ENCODE measurements at regions of chr1 and their contacts with region 1.

Region 1: GRCh38 chr1:223712194-223712849 is at the start of gene CAPN2:
- DNase-seq: peak; percentile 86 to 93 (median 89)
- ATAC-seq: peak; percentile 90 to 97 (median 92)
- H3K4me3 ChIP-seq: peak within 1 kb of the TSS; percentile 66 to 97 (median 86)
- H3K27ac ChIP-seq: peak within 1 kb of the TSS; percentile 93 to 99 (median 97)
- H3K4me1 ChIP-seq: peaks cover 0 to 75% (median 68%) of the 10 kb centered on the region in 12 donors
- H3K27me3 ChIP-seq: no peaks in the 10 kb centered on the region
- CTCF ChIP-seq: peak; percentile 54 to 90 (median 83)
- POLR2A ChIP-seq: peak in 1 of 2 donors; percentile 87
- total RNA-seq, gene CAPN2: 60.2 to 115 (median 82.7) TPM

Region 2: GRCh38 chr1:223700942-223701637 is 11.2 kb before region 1 on chr1:
- intact Hi-C with region 1: loop called in 1 of 10 experiments (anchors 1 kb)
- DNase-seq: peak in 1 of 5 donors; percentile 56
- ATAC-seq: peak in 3 of 4 donors; percentile 16 to 58 (median 51)
- H3K4me3 ChIP-seq: no peak overlapping the region
- H3K27ac ChIP-seq: peak overlapping the region in 7 of 12 donors; percentile 16 to 49 (median 38)
- H3K4me1 ChIP-seq: peaks cover 0 to 46% (median 19%) of the 10 kb centered on the region in 12 donors
- H3K27me3 ChIP-seq: no peaks in the 10 kb centered on the region
- CTCF ChIP-seq: no peak
- POLR2A ChIP-seq: no peak

Region 3: DNA sequence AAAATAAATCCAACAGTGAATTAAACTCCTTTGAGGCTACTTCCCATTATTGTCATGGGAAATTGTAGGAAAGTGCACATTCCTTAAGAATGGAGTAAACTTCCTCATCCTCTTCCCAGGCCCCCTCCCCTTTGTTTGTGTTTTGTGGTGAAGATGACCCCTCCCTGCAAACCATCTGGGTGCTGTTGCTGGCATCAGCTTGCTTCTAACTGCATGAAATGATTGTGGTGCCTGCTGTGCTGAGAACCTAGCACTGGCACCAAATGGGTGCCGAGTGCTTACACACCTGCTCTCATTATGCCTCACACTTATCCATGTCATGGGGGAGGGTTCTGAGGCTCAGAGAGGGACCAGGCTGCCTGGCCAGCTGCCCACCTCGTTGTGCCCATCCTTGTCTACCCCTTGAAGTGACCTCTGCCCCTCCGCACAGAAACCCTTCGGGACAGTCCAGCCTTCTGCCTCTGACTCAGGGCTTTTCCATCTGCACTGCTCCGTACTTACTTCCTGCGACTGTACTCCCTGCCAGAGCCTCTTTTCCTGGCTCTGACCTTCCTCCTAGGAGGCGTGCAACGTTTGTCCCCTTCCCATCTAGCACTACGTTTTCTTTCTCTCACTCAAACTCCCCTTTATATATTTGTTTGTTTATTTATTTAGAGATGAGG is 30.7 kb after region 1 on chr1:
- intact Hi-C with region 1: loop called in 8 of 10 experiments (anchors 1 to 5 kb)
- DNase-seq: no peak
- ATAC-seq: peak in 3 of 4 donors; percentile 48 to 71 (median 56)
- H3K4me3 ChIP-seq: peak overlapping the region in 1 of 12 donors; percentile 14
- H3K27ac ChIP-seq: peak overlapping the region in 11 of 12 donors; percentile 46 to 81 (median 66)
- H3K4me1 ChIP-seq: peaks cover 4 to 72% (median 46%) of the 10 kb centered on the region in 12 donors
- H3K27me3 ChIP-seq: no peaks in the 10 kb centered on the region
- CTCF ChIP-seq: no peak
- POLR2A ChIP-seq: no peak

Region 4: GRCh38 chr1:223748773-223749733 is 36.7 kb after region 1 on chr1:
- intact Hi-C with region 1: loop called (anchors 1 to 5 kb)
- DNase-seq: peak; percentile 60 to 86 (median 69)
- ATAC-seq: peak; percentile 51 to 90 (median 84)
- H3K4me3 ChIP-seq: peak overlapping the region in 11 of 12 donors; percentile 29 to 71 (median 54)
- H3K27ac ChIP-seq: peak overlapping the region in 11 of 12 donors; percentile 45 to 84 (median 70)
- H3K4me1 ChIP-seq: peaks cover 3 to 30% (median 20%) of the 10 kb centered on the region in 12 donors
- H3K27me3 ChIP-seq: no peaks in the 10 kb centered on the region
- CTCF ChIP-seq: peak; percentile 93 to 99 (median 96)
- POLR2A ChIP-seq: no peak

Region 5: GRCh38 chr1:223845810-223846682 is 133.7 kb after region 1 on chr1 and contains the start of gene TP53BP2:
- intact Hi-C with region 1: loop called in 3 of 10 experiments (anchors 1 to 10 kb)
- DNase-seq: peak; percentile 90 to 96 (median 92)
- ATAC-seq: peak; percentile 88 to 97 (median 94)
- H3K4me3 ChIP-seq: peak within 1 kb of the TSS; percentile 75 to 95 (median 90)
- H3K27ac ChIP-seq: peak within 1 kb of the TSS; percentile 96 to 100 (median 99)
- H3K4me1 ChIP-seq: peaks cover 0 to 46% (median 33%) of the 10 kb centered on the region in 12 donors
- H3K27me3 ChIP-seq: no peaks in the 10 kb centered on the region
- CTCF ChIP-seq: peak; percentile 49 to 92 (median 72)
- POLR2A ChIP-seq: peak; percentile 43 to 80
- total RNA-seq, gene TP53BP2: 14.9 to 44.8 (median 23.4) TPM